ENCODE measurements at regions of chr17 and their contacts with region 1.

Region 1: GRCh38 chr17:34361478-34362061 is 1.5 kb downstream of the CCL1 start:
- DNase-seq: peak; percentile 84
- CTCF ChIP-seq: peak; percentile 97

Region 2: GRCh38 chr17:33779225-33779591 is 582.4 kb before region 1 on chr17:
- CTCF ChIA-PET with region 1: interaction called, 14 read pairs
- POLR2A ChIA-PET with region 1: no interaction called
- DNase-seq: peak; percentile 51
- CTCF ChIP-seq: peak; percentile 86

Region 3: DNA sequence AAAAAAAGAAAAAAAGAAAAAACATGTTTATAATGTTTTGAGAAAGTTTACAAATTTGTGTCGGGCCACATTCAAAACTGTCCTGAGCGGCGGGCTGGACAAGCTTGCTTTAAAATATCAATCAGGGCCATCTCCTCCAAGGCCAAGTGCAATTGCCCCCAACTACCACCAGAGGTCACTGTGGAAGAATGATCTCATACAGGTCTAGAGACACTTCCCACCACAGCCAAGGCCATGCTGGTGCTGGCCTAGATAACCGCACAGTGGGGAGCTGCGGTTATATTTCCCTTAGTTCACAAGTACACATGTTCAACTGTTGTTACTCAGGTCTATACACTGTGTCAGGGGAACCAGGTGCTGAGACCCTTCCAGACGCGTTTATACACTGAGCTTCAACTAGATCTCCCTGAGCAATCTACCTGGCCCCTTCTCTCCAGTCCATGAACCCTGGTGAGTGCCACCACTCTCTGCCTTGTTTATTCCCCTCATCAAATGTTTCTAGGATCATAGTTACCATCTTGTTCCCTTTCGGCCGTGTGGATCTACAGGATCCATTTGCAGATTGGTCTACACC is 190.2 kb before region 1 on chr17:
- CTCF ChIA-PET with region 1: interaction called, 44 read pairs
- POLR2A ChIA-PET with region 1: no interaction called
- DNase-seq: peak; percentile 69
- CTCF ChIP-seq: peak; percentile 83

Region 4: DNA sequence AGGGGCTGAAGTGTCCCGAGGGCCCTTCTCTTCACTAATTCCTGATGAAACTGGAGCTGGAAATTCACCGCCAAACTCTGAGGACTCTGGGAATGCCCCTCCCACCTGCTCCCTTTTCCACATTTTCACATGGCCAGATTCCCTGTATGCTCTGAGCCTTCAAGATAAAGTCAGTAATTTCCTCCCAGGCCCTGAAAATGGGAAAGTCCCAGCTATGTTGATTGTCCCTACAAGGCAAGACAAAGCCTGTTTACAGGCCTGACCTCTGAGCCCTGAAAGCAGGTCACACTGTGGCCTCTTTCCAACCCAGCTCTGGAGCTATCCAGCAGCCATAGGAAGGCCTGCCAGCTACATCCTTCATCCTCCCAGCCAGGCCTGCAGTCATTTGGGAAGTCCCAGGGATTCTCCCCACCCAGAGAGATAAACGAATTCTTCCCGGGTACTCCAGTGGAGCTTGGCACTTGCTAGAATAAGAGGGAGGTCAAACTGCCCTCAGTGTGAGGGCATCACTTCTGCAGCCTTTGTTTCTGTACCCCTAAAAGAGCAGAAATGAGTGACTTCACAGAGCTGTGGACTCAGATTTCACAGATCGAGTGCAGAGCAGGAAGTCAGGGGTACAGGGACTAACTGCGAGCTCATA is 126.1 kb before region 1 on chr17:
- CTCF ChIA-PET with region 1: interaction called, 12 read pairs
- POLR2A ChIA-PET with region 1: no interaction called
- DNase-seq: no peak
- CTCF ChIP-seq: no peak

Region 5: DNA sequence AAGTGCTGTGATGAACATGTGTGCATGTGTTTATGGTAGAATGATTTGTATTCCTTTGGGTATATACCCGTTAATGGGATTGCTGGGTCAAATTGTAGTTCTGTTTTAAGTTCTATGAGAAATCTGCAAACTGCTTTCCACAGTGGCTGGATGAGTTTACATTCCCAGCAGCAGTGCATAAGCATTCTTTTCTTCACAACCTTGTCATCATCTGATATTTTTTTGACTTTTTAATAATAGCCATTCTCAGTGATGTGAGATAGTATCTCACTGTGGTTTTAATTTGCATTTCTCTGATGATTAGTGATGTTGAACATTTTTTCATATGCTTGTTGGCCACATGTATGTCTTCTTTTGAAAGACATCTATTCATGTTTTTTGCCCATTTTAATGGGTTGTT is 23.9 kb before region 1 on chr17:
- CTCF ChIA-PET with region 1: interaction called, 16 read pairs
- POLR2A ChIA-PET with region 1: no interaction called
- DNase-seq: no peak
- CTCF ChIP-seq: no peak

Region 6: GRCh38 chr17:34606763-34607162 is 245.2 kb after region 1 on chr17:
- CTCF ChIA-PET with region 1: no interaction called
- POLR2A ChIA-PET with region 1: no interaction called
- DNase-seq: no peak
- CTCF ChIP-seq: no peak

Measured in GM10248 (cell line).